GM12878 (cell line): ENCODE measurements at regions of chr3 and their contacts with region 1.

Region 1: DNA sequence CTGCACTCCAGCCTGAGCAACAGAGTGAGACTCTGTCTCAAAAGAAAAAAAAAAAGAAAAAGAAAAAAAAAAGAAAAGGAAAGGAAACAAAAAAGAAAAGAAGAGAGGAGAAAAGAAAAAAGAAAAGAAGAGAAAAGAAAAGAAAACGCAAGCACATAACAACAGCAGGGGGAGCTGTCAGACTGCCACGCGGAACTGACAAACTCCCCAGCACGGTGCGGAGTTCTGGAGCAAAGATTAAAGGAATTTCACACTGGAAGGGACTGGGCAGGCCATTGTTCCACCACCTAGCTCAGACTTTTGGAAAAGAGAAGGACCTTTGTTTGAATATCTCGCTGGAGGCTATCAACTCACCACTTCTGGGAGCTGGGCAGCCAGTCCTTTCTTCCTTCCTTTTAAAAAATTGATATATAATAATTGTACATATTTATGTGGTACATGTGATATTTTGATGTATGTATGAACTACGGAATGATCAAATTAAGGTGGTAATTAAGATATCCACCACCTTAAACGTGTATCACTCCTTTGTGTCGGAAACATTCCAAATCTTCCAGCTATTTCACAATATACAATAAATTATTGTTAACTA is 40.5 kb downstream of the DPPA2 start:
- DNase-seq: no peak
- ATAC-seq: 0 out of 3 replicates have a peak, but pooled peaks have one; percentile 31
- H3K4me3 ChIP-seq: no peak overlapping the region
- H3K27ac ChIP-seq: no peak overlapping the region
- H3K4me1 ChIP-seq: no peaks in the 10 kb centered on the region
- H3K27me3 ChIP-seq: no peaks in the 10 kb centered on the region
- CTCF ChIP-seq: peak in 2 of 3 experiments; percentile 33 to 42; a peak in 2 of 6 replicates
- EP300 ChIP-seq: no peak
- POLR2A ChIP-seq: no peak
- RAD21 ChIP-seq: peak; percentile 49

Region 2: DNA sequence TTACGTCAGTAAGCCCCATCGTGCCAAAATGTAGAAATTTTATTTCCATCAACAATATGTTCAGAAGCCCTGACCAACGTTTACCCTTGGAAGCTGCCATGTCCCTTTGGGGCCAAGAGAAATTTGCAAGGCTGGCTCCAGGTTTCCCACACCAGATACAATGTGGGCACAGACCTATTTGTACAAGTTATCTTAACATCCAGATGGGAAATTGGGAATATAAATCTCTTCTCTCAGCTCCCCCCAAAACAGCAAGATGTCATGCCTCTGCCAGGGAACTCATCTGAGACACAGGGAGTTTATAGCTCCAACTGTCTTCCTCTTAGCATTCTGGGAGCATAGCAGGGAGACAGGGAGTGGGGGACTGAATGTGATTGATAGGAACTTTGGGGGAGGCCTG is 49.9 kb after region 1 on chr3:
- CTCF ChIA-PET with region 1: no interaction called
- POLR2A ChIA-PET with region 1: no interaction called
- RAD21 ChIA-PET with region 1: no interaction called
- SMC1A ChIA-PET with region 1: no interaction called
- in situ Hi-C with region 1: no loop called
- intact Hi-C with region 1: no loop called
- DNase-seq: no peak
- ATAC-seq: no peak
- H3K4me3 ChIP-seq: no peak overlapping the region
- H3K27ac ChIP-seq: no peak overlapping the region
- H3K4me1 ChIP-seq: no peaks in the 10 kb centered on the region
- H3K27me3 ChIP-seq: no peaks in the 10 kb centered on the region
- CTCF ChIP-seq: no peak
- EP300 ChIP-seq: no peak
- POLR2A ChIP-seq: no peak
- RAD21 ChIP-seq: no peak

Region 3: GRCh38 chr3:109396806-109397205 is 121.0 kb after region 1 on chr3:
- CTCF ChIA-PET with region 1: interaction called, 3 read pairs
- POLR2A ChIA-PET with region 1: no interaction called
- RAD21 ChIA-PET with region 1: no interaction called
- SMC1A ChIA-PET with region 1: no interaction called
- in situ Hi-C with region 1: no loop called
- intact Hi-C with region 1: loop called (anchors 5 kb)
- DNase-seq: no peak
- ATAC-seq: no peak
- H3K4me3 ChIP-seq: no peak overlapping the region
- H3K27ac ChIP-seq: no peak overlapping the region
- H3K4me1 ChIP-seq: no peaks in the 10 kb centered on the region
- H3K27me3 ChIP-seq: no peaks in the 10 kb centered on the region
- CTCF ChIP-seq: no peak
- EP300 ChIP-seq: no peak
- POLR2A ChIP-seq: no peak
- RAD21 ChIP-seq: no peak